GM13977 (cell line): ENCODE measurements at regions of chr1 and their contacts with region 1.

Region 1: GRCh38 chr1:159790237-159790917 is 9.6 kb downstream of the DUSP23 start:
- DNase-seq: peak; percentile 42
- CTCF ChIP-seq: peak; percentile 52

Region 2: GRCh38 chr1:158998781-158999161 is 791.6 kb before region 1 on chr1:
- in situ Hi-C with region 1: no loop called
- DNase-seq: peak; percentile 46
- CTCF ChIP-seq: peak; percentile 71

Region 3: GRCh38 chr1:159891275-159892157 is 101.1 kb after region 1 on chr1:
- in situ Hi-C with region 1: loop called (anchors 5 kb)
- DNase-seq: peak; percentile 72
- CTCF ChIP-seq: peak; percentile 100